AG04450 (cell line): ENCODE measurements at regions of chr13 and their contacts with region 1.

Region 1: GRCh38 chr13:94595950-94596574 is at the start of gene TGDS:
- DNase-seq: peak; percentile 74
- H3K4me3 ChIP-seq: peak within 1 kb of the TSS; percentile 74
- H3K27ac ChIP-seq: peak within 1 kb of the TSS; percentile 68
- H3K27me3 ChIP-seq: no peaks in the 10 kb centered on the region
- CTCF ChIP-seq: no peak
- polyA plus RNA-seq, gene TGDS: 14.7 and 21.7 TPM in 2 replicates

Region 2: DNA sequence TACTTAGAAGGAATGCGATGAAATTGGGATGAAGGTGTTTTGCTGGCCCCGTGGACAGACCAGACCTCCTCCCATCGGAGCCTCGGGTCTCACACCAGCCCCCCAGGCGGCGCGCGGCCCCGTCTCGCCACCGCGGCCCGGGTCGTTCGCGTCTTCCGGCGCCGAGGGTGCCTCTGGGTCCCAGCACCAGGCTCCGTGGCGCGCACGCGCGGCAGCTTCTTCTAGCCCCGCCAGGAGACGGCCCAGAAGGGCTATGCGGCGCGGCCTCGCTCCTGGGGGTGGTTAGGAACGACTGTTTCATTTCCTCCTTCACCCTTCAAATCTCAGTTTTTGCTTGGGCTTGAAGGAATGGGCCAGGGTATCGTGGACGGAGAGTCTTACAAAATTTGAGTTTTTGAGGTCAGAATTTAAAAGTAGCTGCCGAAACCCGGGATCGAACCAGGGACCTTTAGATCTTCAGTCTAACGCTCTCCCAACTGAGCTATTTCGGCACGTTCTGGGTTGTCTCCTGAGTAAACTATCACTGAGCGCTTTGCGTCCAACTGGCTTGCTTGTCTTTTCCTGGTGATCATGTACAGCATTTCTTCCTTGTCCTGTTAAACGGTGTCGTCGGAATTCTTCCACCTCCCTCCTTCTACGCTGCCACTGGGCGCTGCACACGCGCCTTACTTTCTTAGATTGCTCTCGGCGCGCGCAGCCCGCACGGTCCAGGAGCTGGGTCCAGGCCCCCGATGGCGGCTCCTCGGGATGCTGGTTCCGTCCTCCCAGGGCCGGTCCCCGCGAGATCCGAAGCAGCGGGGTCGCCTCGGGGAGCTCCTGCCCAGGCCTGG is 46.6 kb before region 1 on chr13:
- CTCF ChIA-PET with region 1: no interaction called
- POLR2A ChIA-PET with region 1: interaction called, 21 read pairs
- DNase-seq: peak; percentile 92
- H3K4me3 ChIP-seq: peak overlapping the region; percentile 87
- H3K27ac ChIP-seq: peak overlapping the region; percentile 97
- H3K27me3 ChIP-seq: no peaks in the 10 kb centered on the region
- CTCF ChIP-seq: no peak

Region 3: GRCh38 chr13:94608586-94608985 is 12.5 kb after region 1 on chr13:
- CTCF ChIA-PET with region 1: no interaction called
- POLR2A ChIA-PET with region 1: no interaction called
- DNase-seq: no peak
- H3K4me3 ChIP-seq: no peak overlapping the region
- H3K27ac ChIP-seq: no peak overlapping the region
- H3K27me3 ChIP-seq: no peaks in the 10 kb centered on the region
- CTCF ChIP-seq: no peak